ENCODE measurements at regions of chr9 and their contacts with region 1.

Region 1: GRCh38 chr9:34403554-34404380 is 27.1 kb upstream of the MYORG start:
- DNase-seq: peak; percentile 77

Region 2: GRCh38 chr9:34392511-34392910 is 11.3 kb before region 1 on chr9:
- CTCF ChIA-PET with region 1: interaction called, 14 read pairs
- POLR2A ChIA-PET with region 1: no interaction called
- DNase-seq: no peak

Region 3: GRCh38 chr9:34475097-34475496 is 71.3 kb after region 1 on chr9:
- CTCF ChIA-PET with region 1: no interaction called
- POLR2A ChIA-PET with region 1: no interaction called
- DNase-seq: no peak

Region 4: DNA sequence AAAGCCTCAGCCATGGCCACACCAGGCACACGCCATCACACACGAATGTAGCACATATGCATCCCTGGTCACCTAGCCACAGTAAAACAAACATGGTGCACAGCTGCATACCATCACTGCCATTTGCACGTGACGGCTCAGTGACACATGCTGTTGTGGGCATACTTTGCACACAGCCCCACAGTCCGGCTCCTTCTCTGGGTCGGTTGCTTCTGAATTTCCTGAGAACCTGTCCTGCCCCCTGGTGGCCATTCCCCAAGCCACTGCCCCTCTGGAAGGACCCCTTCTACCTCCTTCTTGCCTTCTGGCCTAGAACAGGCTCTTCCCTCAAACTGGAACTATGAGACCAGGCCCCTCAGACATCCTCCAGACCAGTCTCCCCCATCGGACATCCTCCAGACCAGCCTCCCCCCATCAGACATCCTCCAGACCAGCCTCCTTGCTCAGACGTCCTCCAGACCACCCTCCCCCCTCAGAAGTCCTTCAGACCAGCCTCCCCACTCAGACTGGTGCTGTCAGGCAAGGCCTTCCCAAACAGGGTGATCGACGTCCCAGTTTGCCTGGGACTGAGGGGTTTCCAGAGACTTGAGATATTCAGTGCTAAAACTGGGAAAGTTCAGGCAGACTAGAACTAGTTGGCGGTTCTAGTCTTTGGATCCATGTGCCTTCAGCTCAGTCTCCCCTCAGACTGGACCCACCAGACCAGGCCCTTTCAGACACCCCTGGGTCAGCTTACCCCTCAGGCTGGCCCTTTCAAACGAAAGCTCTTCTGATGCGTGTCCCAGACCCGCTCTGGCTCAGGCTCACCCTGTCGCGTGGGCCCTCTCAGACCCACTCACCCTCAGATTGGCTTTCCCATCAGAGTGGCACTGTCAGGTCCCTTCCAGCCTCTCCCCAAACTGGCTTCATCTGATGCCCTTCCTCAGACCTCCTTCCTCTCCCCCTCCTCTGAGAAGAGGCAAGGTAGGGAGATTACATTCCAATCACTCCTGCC is 143.4 kb after region 1 on chr9:
- CTCF ChIA-PET with region 1: interaction called, 15 read pairs
- POLR2A ChIA-PET with region 1: no interaction called
- DNase-seq: peak; percentile 75